Calu3 (cell line): ENCODE measurements at regions of chr19 and their contacts with region 1.

Region 1: GRCh38 chr19:4455719-4456475 is 1.7 kb downstream of the UBXN6 start:
- DNase-seq: no peak
- H3K4me3 Mint-ChIP-seq: peak overlapping the region; percentile 81
- H3K27ac Mint-ChIP-seq: peak overlapping the region; percentile 67
- H3K4me1 Mint-ChIP-seq: peaks cover 11% of the 10 kb centered on the region
- H3K27me3 Mint-ChIP-seq: no peaks in the 10 kb centered on the region
- CTCF ChIP-seq: no peak

Region 2: GRCh38 chr19:2700660-2701360 is 1755.1 kb before region 1 on chr19:
- CTCF ChIA-PET with region 1: interaction called, 10 read pairs
- intact Hi-C with region 1: no loop called
- DNase-seq: no peak
- H3K4me3 Mint-ChIP-seq: no peak overlapping the region
- H3K27ac Mint-ChIP-seq: no peak overlapping the region
- H3K4me1 Mint-ChIP-seq: no peaks in the 10 kb centered on the region
- H3K27me3 Mint-ChIP-seq: peaks cover 33% of the 10 kb centered on the region
- CTCF ChIP-seq: no peak

Region 3: DNA sequence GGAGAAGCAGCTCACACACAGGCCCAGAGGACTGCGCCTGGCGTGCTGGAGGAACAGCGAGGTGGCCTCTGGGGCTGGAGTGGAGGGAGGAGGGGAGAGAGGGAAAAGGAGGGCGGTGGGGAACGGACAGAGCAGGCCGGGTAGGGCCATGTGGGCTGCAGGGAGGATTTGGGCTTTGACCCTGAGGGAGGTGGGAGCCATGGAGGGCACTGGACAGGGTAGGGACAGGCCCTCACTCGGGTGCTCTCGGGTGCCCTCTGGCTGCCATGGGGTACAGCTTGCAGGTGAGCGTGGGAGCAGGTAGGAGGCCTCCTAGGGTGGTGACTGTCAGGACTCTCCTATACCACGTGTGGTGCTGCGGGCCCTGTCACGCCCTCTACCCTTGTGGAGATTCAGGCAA is 39.6 kb after region 1 on chr19:
- CTCF ChIA-PET with region 1: no interaction called
- intact Hi-C with region 1: no loop called
- DNase-seq: peak; percentile 12
- H3K4me3 Mint-ChIP-seq: no peak overlapping the region
- H3K27ac Mint-ChIP-seq: no peak overlapping the region
- H3K4me1 Mint-ChIP-seq: no peaks in the 10 kb centered on the region
- H3K27me3 Mint-ChIP-seq: no peaks in the 10 kb centered on the region
- CTCF ChIP-seq: no peak

Region 4: DNA sequence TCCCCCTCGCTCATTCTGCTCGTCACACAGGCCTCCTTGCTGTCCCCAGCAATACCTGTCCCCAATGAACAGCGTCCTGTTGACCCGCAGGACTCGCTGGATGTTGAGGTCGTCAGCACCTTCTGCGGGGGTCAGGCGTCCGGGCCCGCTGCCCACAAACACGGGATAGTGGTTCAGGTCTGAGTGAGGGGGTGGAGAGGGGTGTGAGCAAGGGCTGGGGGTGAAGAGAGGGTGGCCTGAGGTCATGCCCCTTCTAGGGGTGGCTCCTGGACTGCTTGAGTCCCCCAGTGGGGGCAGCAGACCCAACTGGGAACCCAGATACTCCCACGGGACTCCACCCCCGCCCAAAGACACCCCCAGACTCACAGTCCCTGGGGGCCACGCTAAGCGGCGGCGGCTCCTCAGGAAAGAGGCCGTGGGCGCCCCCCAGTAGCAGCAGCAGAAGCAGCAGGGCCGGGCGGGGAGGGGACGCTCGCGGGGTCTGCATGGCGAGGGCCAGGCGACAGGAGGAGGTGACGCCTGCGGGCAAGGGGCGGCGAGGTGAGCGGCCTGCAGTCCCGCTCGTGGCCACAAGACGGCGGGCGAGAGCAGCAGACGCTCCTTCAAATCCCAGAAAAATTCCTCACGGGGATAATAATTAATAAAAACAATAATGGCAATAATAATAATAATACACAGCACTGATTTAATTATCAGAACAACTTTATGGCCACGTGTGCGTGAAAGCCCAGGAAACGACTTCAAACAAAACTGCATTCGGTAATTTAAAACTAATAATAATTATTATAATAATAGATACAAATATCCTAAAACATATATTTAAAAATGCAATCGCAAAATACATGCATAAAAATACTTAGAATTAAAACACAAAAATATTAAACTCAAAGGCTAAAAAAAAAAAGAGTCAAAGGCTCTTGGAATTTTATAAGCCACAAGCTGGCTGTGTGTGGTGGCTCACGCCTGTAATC is 102.4 kb after region 1 on chr19:
- CTCF ChIA-PET with region 1: no interaction called
- intact Hi-C with region 1: no loop called
- DNase-seq: peak; percentile 51
- H3K4me3 Mint-ChIP-seq: no peak overlapping the region
- H3K27ac Mint-ChIP-seq: no peak overlapping the region
- H3K4me1 Mint-ChIP-seq: no peaks in the 10 kb centered on the region
- H3K27me3 Mint-ChIP-seq: peaks cover 16% of the 10 kb centered on the region
- CTCF ChIP-seq: peak; percentile 97